Calu3 (cell line): ENCODE measurements at regions of chr3 and their contacts with region 1.

Region 1: DNA sequence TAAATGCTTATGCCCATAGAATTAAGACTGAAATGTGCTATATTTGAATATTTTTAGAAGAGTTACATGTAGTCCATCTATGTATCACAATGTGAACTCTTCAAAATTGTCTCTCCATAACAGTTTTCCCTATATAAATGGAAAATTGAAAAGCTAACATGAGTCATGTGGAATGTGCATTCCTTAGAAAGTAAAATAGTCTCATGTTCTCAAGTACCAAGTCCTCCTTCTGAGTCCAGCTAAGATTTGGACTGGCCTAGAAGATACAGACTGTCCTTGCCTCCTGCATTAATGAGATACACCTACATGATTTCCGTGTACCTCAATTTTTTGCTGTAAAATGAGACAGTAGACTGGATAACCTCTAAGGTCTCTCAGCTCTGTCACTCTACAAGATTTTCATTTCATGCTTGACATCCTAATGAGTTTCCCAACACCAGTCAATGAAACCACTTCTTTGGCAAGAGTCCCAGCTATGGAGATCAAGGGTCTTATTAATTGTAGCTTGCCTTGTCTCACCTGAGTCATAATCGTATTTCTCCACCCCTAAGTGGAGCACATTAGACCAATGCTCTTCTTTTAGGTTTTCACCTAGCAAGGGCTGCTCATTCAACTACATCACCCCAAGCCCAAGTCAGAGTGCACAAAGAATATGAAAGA is 350.6 kb upstream of the IL12A start:
- DNase-seq: peak; percentile 66
- H3K4me3 Mint-ChIP-seq: no peak overlapping the region
- H3K27ac Mint-ChIP-seq: no peak overlapping the region
- H3K4me1 Mint-ChIP-seq: peaks cover 52% of the 10 kb centered on the region
- H3K27me3 Mint-ChIP-seq: no peaks in the 10 kb centered on the region
- CTCF ChIP-seq: no peak

Region 2: GRCh38 chr3:159210336-159210735 is 427.7 kb before region 1 on chr3:
- CTCF ChIA-PET with region 1: no interaction called
- intact Hi-C with region 1: no loop called
- DNase-seq: no peak
- H3K4me3 Mint-ChIP-seq: no peak overlapping the region
- H3K27ac Mint-ChIP-seq: no peak overlapping the region
- H3K4me1 Mint-ChIP-seq: peaks cover 8% of the 10 kb centered on the region
- H3K27me3 Mint-ChIP-seq: no peaks in the 10 kb centered on the region
- CTCF ChIP-seq: no peak

Region 3: DNA sequence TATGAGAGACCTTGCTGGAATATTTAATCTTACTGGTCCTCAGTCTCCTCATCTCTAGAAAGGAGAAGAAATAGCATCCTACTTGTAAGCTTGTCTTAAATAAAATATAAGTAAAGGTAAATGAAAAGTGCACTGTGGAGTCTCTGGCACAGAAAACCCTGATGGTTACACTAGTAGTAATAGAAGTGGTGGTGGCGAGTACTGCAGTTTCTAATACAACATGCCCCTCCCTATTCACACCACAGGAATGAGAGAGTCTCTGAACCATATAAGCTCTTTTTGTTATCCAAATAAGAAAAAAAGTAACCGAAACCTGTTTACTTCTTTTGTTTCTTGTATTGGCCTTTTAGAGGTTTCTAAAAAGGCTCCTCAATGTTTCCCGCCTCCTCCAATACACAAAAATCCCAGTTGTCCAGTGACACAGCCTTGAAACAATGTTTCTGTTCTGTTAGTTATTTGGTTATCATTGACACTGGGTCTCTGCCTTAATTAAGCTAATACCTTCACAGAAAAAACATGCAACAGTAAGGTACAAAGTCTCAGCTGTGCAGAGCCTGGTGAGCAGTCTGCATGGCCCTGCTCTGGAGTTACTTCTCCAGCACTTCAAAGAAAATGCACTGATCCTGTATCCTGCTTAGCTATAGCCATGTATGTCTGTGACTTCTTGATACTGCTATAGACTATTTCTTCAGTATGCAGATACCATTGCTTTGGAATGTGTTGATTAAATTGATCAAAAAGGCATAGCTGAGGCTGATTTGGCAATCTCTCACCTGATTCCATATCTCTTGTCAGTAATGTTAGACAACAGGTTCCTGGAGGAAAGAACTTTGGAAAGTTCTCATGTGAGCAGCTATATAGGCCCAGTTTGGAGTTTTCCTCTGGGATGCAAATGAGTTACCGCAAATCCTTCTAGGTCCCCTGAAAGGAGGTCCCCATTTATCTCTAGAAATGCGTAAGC is 35.0 kb after region 1 on chr3:
- CTCF ChIA-PET with region 1: interaction called, 4 read pairs
- intact Hi-C with region 1: loop called (anchors 2 kb)
- DNase-seq: no peak
- H3K4me3 Mint-ChIP-seq: no peak overlapping the region
- H3K27ac Mint-ChIP-seq: no peak overlapping the region
- H3K4me1 Mint-ChIP-seq: peaks cover 16% of the 10 kb centered on the region
- H3K27me3 Mint-ChIP-seq: no peaks in the 10 kb centered on the region
- CTCF ChIP-seq: peak; percentile 12